WTC11 (cell line): ENCODE measurements at regions of chr18 and their contacts with region 1.

Region 1: DNA sequence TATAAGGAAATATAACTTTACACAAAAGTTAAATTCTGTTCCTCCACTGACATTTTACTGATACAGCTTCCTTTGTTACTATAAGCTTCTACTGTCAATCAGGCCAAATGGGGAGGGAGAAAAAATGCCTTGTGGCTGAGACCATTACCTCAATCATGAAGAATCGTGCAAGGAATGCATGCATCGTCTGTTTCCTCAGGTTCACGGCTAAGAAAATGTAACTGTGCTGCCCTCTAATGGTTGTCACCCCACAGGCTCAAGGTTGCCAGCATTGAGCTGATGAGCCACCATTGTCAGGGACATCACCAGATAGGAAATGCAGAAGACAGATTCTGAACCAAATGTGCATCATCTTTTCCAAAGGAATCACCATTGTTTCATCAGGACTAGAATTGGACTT is 426.9 kb downstream of the CDH2 start:
- DNase-seq: peak; percentile 69
- ATAC-seq: peak; percentile 98
- H3K4me3 Mint-ChIP-seq: no peak overlapping the region
- H3K27ac Mint-ChIP-seq: no peak overlapping the region
- H3K4me1 Mint-ChIP-seq: peaks cover 15% of the 10 kb centered on the region
- H3K27me3 Mint-ChIP-seq: no peaks in the 10 kb centered on the region
- CTCF ChIP-seq: peak; percentile 40

Region 2: GRCh38 chr18:27363872-27364271 is 386.1 kb before region 1 on chr18:
- CTCF ChIA-PET with region 1: interaction called, 13 read pairs
- POLR2A ChIA-PET with region 1: no interaction called
- DNase-seq: no peak
- ATAC-seq: peak; percentile 57
- H3K4me3 Mint-ChIP-seq: no peak overlapping the region
- H3K27ac Mint-ChIP-seq: no peak overlapping the region
- H3K4me1 Mint-ChIP-seq: no peaks in the 10 kb centered on the region
- H3K27me3 Mint-ChIP-seq: no peaks in the 10 kb centered on the region; the same call in 1 of the 2 replicates
- CTCF ChIP-seq: no peak

Region 3: GRCh38 chr18:27605107-27605834 is 144.7 kb before region 1 on chr18:
- CTCF ChIA-PET with region 1: interaction called, 146 read pairs
- POLR2A ChIA-PET with region 1: interaction called, 4 read pairs
- DNase-seq: peak; percentile 61
- ATAC-seq: peak; percentile 89
- H3K4me3 Mint-ChIP-seq: no peak overlapping the region
- H3K27ac Mint-ChIP-seq: 0 out of 2 replicates have a peak overlapping the region, but pooled peaks have one; percentile 51
- H3K4me1 Mint-ChIP-seq: peaks cover 25% of the 10 kb centered on the region
- H3K27me3 Mint-ChIP-seq: no peaks in the 10 kb centered on the region
- CTCF ChIP-seq: peak; percentile 83

Region 4: DNA sequence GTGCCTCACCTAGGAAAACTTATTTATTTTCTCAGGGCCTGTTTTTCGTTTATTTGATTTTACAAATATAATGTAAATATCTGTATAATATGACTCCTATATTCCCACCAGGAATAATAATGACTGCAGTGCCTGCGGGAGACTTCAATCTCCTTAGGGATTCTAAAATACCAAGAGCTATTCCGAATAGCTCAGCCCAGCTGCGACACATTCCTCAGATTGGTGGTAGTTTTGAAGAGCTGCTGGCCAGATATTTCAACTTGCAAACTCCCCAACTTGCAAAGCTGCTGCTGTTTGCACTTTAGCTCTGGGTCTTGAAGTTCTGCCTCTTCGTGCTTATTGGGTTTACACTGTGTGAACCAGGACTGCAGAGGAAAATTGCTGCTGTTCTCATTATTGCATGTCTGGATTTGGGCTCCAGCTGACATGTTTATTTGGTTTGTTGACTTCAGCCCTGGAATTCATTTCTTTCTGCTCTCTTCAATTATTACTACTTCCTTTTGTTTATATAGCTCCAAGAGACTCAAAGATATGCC is 84.7 kb before region 1 on chr18:
- CTCF ChIA-PET with region 1: interaction called, 13 read pairs
- POLR2A ChIA-PET with region 1: no interaction called
- DNase-seq: peak; percentile 33
- ATAC-seq: peak; percentile 72
- H3K4me3 Mint-ChIP-seq: no peak overlapping the region
- H3K27ac Mint-ChIP-seq: peak overlapping the region; percentile 73
- H3K4me1 Mint-ChIP-seq: peaks cover 54% of the 10 kb centered on the region
- H3K27me3 Mint-ChIP-seq: no peaks in the 10 kb centered on the region
- CTCF ChIP-seq: no peak

Region 5: GRCh38 chr18:27731211-27731610 is 18.8 kb before region 1 on chr18:
- CTCF ChIA-PET with region 1: interaction called, 12 read pairs
- POLR2A ChIA-PET with region 1: no interaction called
- DNase-seq: no peak
- ATAC-seq: no peak
- H3K4me3 Mint-ChIP-seq: no peak overlapping the region
- H3K27ac Mint-ChIP-seq: no peak overlapping the region
- H3K4me1 Mint-ChIP-seq: no peaks in the 10 kb centered on the region
- H3K27me3 Mint-ChIP-seq: no peaks in the 10 kb centered on the region; the same call in 1 of the 2 replicates
- CTCF ChIP-seq: no peak

Region 6: DNA sequence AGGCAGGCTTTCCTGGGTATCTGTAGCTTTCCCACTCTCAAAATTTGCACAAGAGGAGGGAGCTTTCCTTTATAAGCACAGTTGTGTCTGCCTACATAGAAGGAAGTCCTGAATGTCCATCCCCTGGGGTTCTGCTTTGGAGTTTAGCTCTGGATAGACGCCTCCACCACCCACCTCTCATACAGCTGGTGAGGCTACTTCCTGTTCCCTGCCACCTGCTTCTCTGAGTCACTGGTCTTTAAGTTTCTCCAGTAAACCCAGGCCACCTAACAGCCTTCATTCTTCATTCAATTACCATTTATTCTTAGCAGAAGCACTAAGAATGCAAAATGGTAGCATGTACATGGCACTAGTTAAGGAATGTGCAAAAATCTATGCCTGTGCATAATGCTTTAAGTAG is 19.1 kb after region 1 on chr18:
- CTCF ChIA-PET with region 1: interaction called, 14 read pairs
- POLR2A ChIA-PET with region 1: no interaction called
- DNase-seq: no peak
- ATAC-seq: no peak
- H3K4me3 Mint-ChIP-seq: no peak overlapping the region
- H3K27ac Mint-ChIP-seq: no peak overlapping the region
- H3K4me1 Mint-ChIP-seq: 0 out of 2 replicates have a peak, but pooled peaks cover 3% of the 10 kb centered on the region
- H3K27me3 Mint-ChIP-seq: peaks cover 3% of the 10 kb centered on the region; the same call in 1 of the 2 replicates
- CTCF ChIP-seq: no peak